Heart right ventricle (tissue), 16 donors: ENCODE measurements at regions of chr7 and their contacts with region 1.

Region 1: GRCh38 chr7:96093435-96093834 is 228.5 kb downstream of the SLC25A13 start:
- DNase-seq: no peak
- ATAC-seq: no peak
- H3K4me3 ChIP-seq: no peak overlapping the region
- H3K27ac ChIP-seq: no peak overlapping the region
- H3K4me1 ChIP-seq: no peaks in the 10 kb centered on the region
- H3K27me3 ChIP-seq: no peaks in the 10 kb centered on the region
- CTCF ChIP-seq: no peak

Region 2: GRCh38 chr7:96151889-96152288 is 58.5 kb after region 1 on chr7:
- intact Hi-C with region 1: loop called in 1 of 10 experiments (anchors 10 kb)
- DNase-seq: peak in 1 of 2 donors; percentile 19
- ATAC-seq: no peak
- H3K4me3 ChIP-seq: no peak overlapping the region
- H3K27ac ChIP-seq: no peak overlapping the region
- H3K4me1 ChIP-seq: no peaks in the 10 kb centered on the region
- H3K27me3 ChIP-seq: no peaks in the 10 kb centered on the region
- CTCF ChIP-seq: no peak